Heart right ventricle (tissue), 16 donors: ENCODE measurements at regions of chr4 and their contacts with region 1.

Region 1: DNA sequence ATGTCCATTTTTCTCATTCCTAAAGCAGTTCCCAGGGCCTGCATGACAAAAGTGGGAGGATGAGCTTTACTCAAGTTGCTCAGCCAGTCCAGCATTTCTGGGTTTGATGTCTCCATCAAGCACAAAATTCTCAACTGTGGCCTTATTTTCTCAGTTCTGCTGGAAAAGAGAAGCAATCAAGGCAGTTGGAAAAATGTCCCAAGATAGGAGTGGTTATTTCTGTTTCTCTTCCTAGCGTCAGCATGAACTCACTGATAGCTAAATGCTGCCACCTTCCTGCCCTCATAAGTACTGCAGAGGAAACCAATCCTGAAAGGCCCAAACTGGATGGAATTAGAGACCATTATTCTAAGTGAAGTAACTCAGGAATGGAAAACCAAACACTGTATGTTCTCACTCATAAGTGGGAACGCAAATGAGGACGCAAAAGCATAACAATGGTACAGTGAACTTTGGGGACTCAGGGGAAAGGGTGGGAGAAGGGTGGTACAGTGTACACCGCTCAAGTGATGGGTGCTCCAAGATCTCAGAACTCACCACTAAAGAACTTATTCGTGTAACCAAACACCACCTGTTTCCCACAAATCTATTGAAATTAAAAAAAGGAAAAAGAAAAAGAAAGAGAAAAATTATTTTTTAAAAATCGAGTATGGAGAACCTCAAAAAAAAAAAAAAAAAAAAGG is 29.6 kb downstream of the ADH7 start:
- DNase-seq: peak; percentile 12 to 73
- ATAC-seq: peak; percentile 67 to 84 (median 78)
- H3K4me3 ChIP-seq: no peak overlapping the region
- H3K27ac ChIP-seq: peak overlapping the region in 8 of 10 donors; percentile 3 to 67 (median 56)
- H3K4me1 ChIP-seq: peaks cover 0 to 15% (median 8%) of the 10 kb centered on the region in 9 donors
- H3K27me3 ChIP-seq: no peaks in the 10 kb centered on the region
- CTCF ChIP-seq: peak; percentile 79 to 95 (median 94)

Region 2: GRCh38 chr4:98745366-98745765 is 660.2 kb before region 1 on chr4:
- intact Hi-C with region 1: loop called in 1 of 10 experiments (anchors 10 kb)
- DNase-seq: no peak
- ATAC-seq: peak in 2 of 8 donors; percentile 27 to 44
- H3K4me3 ChIP-seq: no peak overlapping the region
- H3K27ac ChIP-seq: no peak overlapping the region
- H3K4me1 ChIP-seq: no peaks in the 10 kb centered on the region
- H3K27me3 ChIP-seq: no peaks in the 10 kb centered on the region
- CTCF ChIP-seq: peak in 4 of 9 donors; percentile 28 to 43 (median 34)

Region 3: GRCh38 chr4:98939892-98940298 is 465.7 kb before region 1 on chr4:
- intact Hi-C with region 1: loop called in 2 of 10 experiments (anchors 5 to 10 kb)
- DNase-seq: no peak
- ATAC-seq: peak in 5 of 8 donors; percentile 42 to 62 (median 53)
- H3K4me3 ChIP-seq: no peak overlapping the region
- H3K27ac ChIP-seq: no peak overlapping the region
- H3K4me1 ChIP-seq: no peaks in the 10 kb centered on the region
- H3K27me3 ChIP-seq: no peaks in the 10 kb centered on the region
- CTCF ChIP-seq: peak; percentile 37 to 81 (median 73)

Region 4: GRCh38 chr4:99054428-99054994 is 351.1 kb before region 1 on chr4:
- intact Hi-C with region 1: loop called in 1 of 10 experiments (anchors 10 kb)
- DNase-seq: no peak
- ATAC-seq: no peak
- H3K4me3 ChIP-seq: no peak overlapping the region
- H3K27ac ChIP-seq: no peak overlapping the region
- H3K4me1 ChIP-seq: peaks cover 0 to 24% (median 9%) of the 10 kb centered on the region in 9 donors
- H3K27me3 ChIP-seq: no peaks in the 10 kb centered on the region
- CTCF ChIP-seq: no peak

Region 5: GRCh38 chr4:99205153-99205979 is 200.2 kb before region 1 on chr4:
- intact Hi-C with region 1: loop called in 8 of 10 experiments (anchors 2 to 10 kb)
- DNase-seq: no peak
- ATAC-seq: peak in 4 of 8 donors; percentile 37 to 80 (median 48)
- H3K4me3 ChIP-seq: no peak overlapping the region
- H3K27ac ChIP-seq: no peak overlapping the region
- H3K4me1 ChIP-seq: peaks cover 0 to 19% (median 0%) of the 10 kb centered on the region in 9 donors
- H3K27me3 ChIP-seq: no peaks in the 10 kb centered on the region
- CTCF ChIP-seq: no peak

Region 6: DNA sequence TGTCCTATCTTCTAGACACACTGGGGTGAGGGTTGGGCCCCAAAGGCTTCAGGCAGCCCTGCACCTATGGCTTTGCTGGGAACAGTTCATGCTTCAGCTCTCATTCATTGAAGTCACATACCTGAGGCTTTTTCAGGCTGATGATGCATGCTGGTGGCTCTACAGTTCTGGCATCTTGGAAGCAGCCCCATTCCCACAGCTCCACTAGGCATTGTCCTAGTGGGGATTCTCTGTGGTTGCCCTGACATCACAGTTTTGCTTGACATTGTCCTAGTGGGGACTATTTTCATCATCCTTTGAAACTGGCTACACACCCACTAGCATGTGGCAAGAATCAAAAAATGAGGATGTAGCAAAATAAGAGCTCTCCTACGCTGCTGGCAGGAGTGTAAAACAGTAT is 67.6 kb after region 1 on chr4:
- intact Hi-C with region 1: no loop called
- DNase-seq: no peak
- ATAC-seq: no peak
- H3K4me3 ChIP-seq: no peak overlapping the region
- H3K27ac ChIP-seq: no peak overlapping the region
- H3K4me1 ChIP-seq: no peaks in the 10 kb centered on the region
- H3K27me3 ChIP-seq: peaks cover 0 to 6% (median 0%) of the 10 kb centered on the region in 7 donors
- CTCF ChIP-seq: no peak